ENCODE measurements at regions of chr13 and their contacts with region 1.

Region 1: DNA sequence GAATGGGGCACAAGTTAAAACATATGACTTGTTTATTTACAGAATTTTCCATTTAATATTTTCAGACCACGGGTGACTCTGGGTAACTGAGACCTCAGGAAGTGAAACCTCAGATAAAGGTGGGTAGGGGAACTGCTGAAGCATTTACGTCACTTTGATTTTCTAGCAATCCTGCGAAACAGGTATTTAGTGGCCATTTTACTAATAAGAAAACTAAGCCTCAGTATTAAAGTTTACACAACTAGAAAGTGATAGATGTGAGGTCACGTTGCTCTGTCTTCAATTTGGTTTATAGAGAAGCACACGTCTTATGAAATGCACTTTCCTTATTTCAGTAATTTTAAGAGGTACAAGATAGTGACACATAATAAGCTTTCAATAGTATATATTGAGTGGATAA is 402.8 kb downstream of the FGF9 start:
- DNase-seq: no peak
- H3K4me3 Mint-ChIP-seq: no peak overlapping the region
- H3K27ac Mint-ChIP-seq: peak overlapping the region; percentile 28
- H3K4me1 Mint-ChIP-seq: peaks cover 47% of the 10 kb centered on the region
- H3K27me3 Mint-ChIP-seq: no peaks in the 10 kb centered on the region

Region 2: DNA sequence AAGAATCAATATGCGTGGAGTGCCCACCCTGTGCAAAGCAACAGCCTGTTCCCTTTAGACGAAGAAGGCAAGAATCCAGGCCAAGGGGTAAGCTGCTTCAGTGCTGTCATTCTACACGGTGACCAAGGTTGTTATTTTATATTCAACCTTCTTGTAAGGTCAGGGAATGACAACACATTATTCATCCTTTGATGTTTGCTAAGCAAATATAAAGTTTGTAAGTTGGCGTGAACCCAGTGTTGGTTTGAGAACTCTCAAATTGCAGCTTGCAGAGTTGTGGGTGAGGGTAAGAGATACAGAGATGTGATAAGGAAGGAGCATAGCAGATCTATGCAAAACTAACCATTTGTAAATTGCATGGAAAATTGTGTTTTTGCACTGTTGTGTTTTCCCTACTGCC is 33.8 kb after region 1 on chr13:
- CTCF ChIA-PET with region 1: no interaction called
- POLR2A ChIA-PET with region 1: no interaction called
- intact Hi-C with region 1: loop called (anchors 2 kb)
- DNase-seq: no peak
- H3K4me3 Mint-ChIP-seq: no peak overlapping the region
- H3K27ac Mint-ChIP-seq: no peak overlapping the region
- H3K4me1 Mint-ChIP-seq: peaks cover 72% of the 10 kb centered on the region
- H3K27me3 Mint-ChIP-seq: no peaks in the 10 kb centered on the region

Region 3: DNA sequence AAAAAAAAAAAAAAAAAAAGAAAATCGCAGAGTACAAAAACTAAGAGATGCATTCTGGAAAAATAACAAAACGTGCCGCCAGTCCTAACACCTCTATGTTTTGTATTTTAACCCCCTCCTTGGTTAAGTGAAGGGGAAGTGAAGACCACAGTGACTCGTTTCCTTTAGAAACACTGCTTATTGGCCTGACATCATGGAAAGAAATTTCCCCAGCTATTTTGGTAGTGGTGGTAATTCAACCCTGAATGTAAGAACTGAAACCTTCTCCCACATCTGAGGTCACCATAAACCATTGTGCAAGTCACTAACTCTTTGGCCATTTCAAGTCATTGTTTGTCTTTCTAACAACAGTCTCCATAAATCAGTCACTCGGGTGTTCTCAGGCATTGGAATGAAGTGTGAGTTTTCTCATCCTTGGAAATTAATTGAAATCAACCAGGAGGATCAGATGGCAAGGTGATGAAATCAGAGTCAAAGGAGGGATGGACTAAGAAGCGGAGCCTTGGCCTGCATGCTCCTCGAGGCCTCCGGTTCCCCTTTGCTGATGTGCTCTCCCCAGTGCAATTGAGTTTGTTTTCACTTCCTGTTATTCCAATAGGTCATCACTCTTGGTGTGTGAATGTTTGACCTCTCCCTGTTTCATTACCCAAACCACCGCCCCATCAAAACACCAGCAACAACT is 41.1 kb after region 1 on chr13:
- CTCF ChIA-PET with region 1: no interaction called
- POLR2A ChIA-PET with region 1: no interaction called
- intact Hi-C with region 1: loop called (anchors 1 kb)
- DNase-seq: peak; percentile 18
- H3K4me3 Mint-ChIP-seq: peak overlapping the region; percentile 3
- H3K27ac Mint-ChIP-seq: peak overlapping the region; percentile 79
- H3K4me1 Mint-ChIP-seq: peaks cover 51% of the 10 kb centered on the region
- H3K27me3 Mint-ChIP-seq: no peaks in the 10 kb centered on the region

Region 4: GRCh38 chr13:22126433-22127021 is 52.8 kb after region 1 on chr13:
- CTCF ChIA-PET with region 1: no interaction called
- POLR2A ChIA-PET with region 1: no interaction called
- intact Hi-C with region 1: loop called (anchors 1 kb)
- DNase-seq: no peak
- H3K4me3 Mint-ChIP-seq: no peak overlapping the region
- H3K27ac Mint-ChIP-seq: no peak overlapping the region
- H3K4me1 Mint-ChIP-seq: peaks cover 34% of the 10 kb centered on the region
- H3K27me3 Mint-ChIP-seq: no peaks in the 10 kb centered on the region

Region 5: DNA sequence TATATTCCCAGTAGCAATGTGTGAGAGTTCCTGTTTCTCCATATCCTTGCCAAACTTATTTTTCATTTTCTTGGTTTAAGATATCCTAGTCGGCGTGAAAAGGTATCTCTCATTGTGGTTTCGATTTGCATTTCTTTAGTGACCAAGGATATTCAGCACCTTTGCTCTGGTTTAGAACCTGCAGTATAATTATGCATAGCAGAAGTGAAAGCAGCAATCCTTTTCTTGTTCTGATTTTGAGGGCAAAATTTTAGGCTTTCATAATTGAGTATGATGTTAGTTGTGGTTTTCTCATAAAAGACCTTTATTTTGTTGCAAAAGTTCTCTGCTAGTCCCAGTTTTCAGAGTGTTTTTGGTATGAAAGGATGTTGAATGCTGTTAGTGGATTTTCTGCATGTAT is 88.2 kb after region 1 on chr13:
- CTCF ChIA-PET with region 1: no interaction called
- POLR2A ChIA-PET with region 1: no interaction called
- intact Hi-C with region 1: loop called (anchors 1 kb)
- DNase-seq: no peak
- H3K4me3 Mint-ChIP-seq: peak overlapping the region; percentile 34
- H3K27ac Mint-ChIP-seq: no peak overlapping the region
- H3K4me1 Mint-ChIP-seq: peaks cover 39% of the 10 kb centered on the region
- H3K27me3 Mint-ChIP-seq: no peaks in the 10 kb centered on the region